BJ (cell line): ENCODE measurements at regions of chr13 and their contacts with region 1.

Region 1: GRCh38 chr13:21638319-21639282 is 32.3 kb upstream of the FGF9 start:
- DNase-seq: no peak
- H3K4me3 ChIP-seq: no peak overlapping the region
- H3K27me3 ChIP-seq: no peaks in the 10 kb centered on the region
- CTCF ChIP-seq: peak; percentile 64

Region 2: GRCh38 chr13:19645000-19645399 is 1993.6 kb before region 1 on chr13:
- CTCF ChIA-PET with region 1: no interaction called
- POLR2A ChIA-PET with region 1: no interaction called
- DNase-seq: no peak
- H3K4me3 ChIP-seq: no peak overlapping the region
- H3K27me3 ChIP-seq: no peaks in the 10 kb centered on the region
- CTCF ChIP-seq: no peak

Region 3: GRCh38 chr13:21453387-21454081 is 185.1 kb before region 1 on chr13:
- CTCF ChIA-PET with region 1: no interaction called
- POLR2A ChIA-PET with region 1: no interaction called
- DNase-seq: no peak
- H3K4me3 ChIP-seq: no peak overlapping the region
- H3K27me3 ChIP-seq: no peaks in the 10 kb centered on the region
- CTCF ChIP-seq: no peak

Region 4: DNA sequence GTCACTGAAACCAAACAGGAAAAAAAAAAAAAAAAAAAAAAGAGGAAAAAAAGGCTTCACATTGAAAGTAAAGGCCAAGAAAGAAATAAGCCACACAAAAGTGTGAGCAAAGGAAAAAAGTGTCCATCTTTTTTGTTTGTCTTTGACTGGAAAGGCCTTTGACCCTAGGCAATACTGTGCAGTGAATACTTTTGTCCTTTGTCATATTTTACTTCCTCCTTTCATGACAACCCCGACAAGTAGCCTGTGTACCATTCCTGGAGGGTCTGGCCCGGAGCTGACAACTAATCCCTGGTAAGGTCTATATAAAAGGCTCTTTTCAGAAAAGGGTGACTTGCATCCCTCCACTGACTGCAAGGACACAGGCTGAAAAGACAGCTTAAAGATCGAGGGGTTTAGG is 21.7 kb before region 1 on chr13:
- CTCF ChIA-PET with region 1: interaction called, 13 read pairs
- POLR2A ChIA-PET with region 1: no interaction called
- DNase-seq: no peak
- H3K4me3 ChIP-seq: no peak overlapping the region
- H3K27me3 ChIP-seq: no peaks in the 10 kb centered on the region; the same call in 1 of the 2 replicates
- CTCF ChIP-seq: no peak

Region 5: DNA sequence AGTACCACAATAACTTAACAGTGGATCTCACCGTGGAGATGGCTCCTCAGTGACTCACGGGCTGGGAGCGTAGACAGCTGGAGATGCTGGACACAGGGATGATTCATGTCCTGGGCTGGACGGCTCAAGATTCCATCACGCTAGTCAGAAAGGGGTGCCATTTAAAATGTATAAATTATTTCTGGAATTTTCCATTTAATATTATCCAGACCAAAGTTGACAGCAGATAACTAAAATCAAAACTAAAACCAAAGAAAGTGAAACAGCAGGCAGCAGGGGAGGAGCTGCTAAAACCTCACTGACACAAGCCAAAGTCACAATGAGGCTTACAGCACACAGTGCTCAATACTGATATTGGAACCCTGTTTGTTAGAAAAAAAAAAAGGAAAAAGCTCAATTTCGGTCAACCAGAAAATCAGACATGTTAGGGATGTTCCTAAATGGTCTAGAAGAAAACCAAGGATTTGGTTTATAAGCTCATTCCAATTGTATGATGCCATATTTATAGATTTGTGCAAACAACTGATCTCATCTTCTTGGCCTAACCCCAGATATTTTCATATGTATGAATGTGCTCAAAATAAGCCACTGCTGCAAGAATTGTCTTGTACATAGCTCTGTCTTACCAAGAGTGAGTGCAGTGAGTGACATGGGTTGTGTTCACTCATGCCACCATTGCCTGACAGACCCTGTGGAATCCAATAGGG is 1683.1 kb after region 1 on chr13:
- CTCF ChIA-PET with region 1: interaction called, 16 read pairs
- POLR2A ChIA-PET with region 1: no interaction called
- DNase-seq: peak; percentile 81
- H3K4me3 ChIP-seq: peak overlapping the region; percentile 5
- H3K27me3 ChIP-seq: no peaks in the 10 kb centered on the region
- CTCF ChIP-seq: no peak